ENCODE measurements at regions of chr6 and their contacts with region 1.

Region 1: DNA sequence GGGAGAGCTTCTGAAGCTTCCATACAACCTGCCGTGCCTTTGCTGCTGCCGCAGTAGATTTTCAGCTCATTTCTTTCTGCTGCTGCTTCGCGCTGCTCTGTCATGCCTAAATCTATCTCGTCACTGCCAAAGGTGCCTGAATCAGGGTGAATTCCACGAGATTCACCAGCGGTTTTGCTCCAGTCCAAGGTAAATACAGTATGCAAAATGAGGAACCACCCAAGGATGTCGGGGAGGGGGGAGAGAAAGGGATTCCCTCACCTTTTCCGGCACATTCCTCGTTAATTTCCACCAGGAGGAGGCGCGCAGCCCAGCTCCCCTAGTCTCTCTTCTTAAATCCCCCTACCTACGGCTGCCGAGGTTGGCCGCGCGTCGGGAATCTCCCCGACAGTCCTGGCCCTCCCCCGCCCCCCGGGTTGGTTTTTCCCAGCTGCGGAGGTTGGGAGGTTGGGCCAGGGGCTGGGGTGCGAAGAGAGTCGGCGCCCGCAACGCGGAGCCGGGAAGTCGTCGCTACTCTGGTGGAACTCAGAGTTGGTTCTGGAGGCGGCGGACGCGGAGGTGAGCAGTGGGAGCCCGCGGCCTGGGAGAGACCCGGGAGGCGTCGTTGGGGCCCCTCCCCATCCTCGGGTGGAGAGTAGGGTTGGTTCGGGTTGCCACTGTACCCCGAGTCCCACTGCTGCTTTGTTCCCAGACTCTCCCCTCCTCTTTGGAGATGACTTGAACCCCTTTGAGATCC is at the start of gene TPBG:
- DNase-seq: peak; percentile 69
- ATAC-seq: peak; percentile 59
- H3K4me3 ChIP-seq: peak within 1 kb of the TSS; percentile 79
- H3K27ac ChIP-seq: peak within 1 kb of the TSS; percentile 81
- H3K4me1 ChIP-seq: peaks cover 28% of the 10 kb centered on the region
- H3K27me3 ChIP-seq: no peaks in the 10 kb centered on the region
- CTCF ChIP-seq: peak; percentile 48
- total RNA-seq, gene TPBG: 43.0 and 49.6 TPM in 2 replicates

Region 2: GRCh38 chr6:82260997-82261686 is 102.4 kb before region 1 on chr6:
- CTCF ChIA-PET with region 1: no interaction called
- POLR2A ChIA-PET with region 1: no interaction called
- intact Hi-C with region 1: no loop called
- DNase-seq: no peak
- ATAC-seq: no peak
- H3K4me3 ChIP-seq: no peak overlapping the region
- H3K27ac ChIP-seq: peak overlapping the region; percentile 69
- H3K4me1 ChIP-seq: peaks cover 28% of the 10 kb centered on the region
- H3K27me3 ChIP-seq: no peaks in the 10 kb centered on the region
- CTCF ChIP-seq: no peak

Region 3: GRCh38 chr6:82396964-82397751 is 33.6 kb after region 1 on chr6:
- CTCF ChIA-PET with region 1: no interaction called
- POLR2A ChIA-PET with region 1: interaction called, 4 read pairs
- intact Hi-C with region 1: loop called (anchors 5 kb)
- DNase-seq: peak; percentile 93
- ATAC-seq: peak; percentile 81
- H3K4me3 ChIP-seq: peak overlapping the region; percentile 56
- H3K27ac ChIP-seq: peak overlapping the region; percentile 99
- H3K4me1 ChIP-seq: peaks cover 33% of the 10 kb centered on the region
- H3K27me3 ChIP-seq: no peaks in the 10 kb centered on the region
- CTCF ChIP-seq: no peak

Region 4: DNA sequence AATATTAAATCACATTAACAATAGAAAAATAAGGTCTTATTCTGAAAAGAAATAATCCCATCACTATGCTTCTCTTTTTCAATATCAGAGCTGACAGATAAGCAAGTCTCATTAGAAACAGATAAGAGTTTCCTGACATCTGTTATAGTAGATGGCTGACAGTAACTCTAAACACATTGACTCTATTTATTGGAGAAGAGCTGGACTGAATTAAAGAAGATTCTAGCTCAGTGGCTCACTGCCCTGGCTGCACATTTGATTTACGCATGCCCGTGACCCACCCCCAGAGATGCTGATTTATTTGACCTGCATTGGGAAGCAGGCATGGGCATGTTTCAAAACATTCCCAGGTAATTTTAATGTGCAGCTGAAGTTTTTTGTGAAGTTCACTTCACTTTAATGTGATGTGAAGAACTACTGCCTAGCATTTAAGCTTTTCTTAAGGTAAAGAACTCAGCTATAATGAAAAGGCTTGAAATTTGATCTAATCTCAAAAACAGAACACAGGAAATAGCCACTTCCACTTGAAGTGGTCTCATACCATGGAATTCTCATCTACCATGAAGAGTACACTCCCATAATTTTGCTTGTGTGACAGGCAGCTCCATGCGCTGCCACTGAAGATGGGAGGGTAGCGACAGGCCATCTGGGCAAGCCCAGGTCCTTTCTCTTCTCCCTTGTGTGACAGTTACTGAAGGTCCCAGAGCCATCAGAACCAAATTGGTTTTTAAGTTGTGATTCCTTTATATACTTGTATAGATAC is 162.4 kb after region 1 on chr6:
- CTCF ChIA-PET with region 1: no interaction called
- POLR2A ChIA-PET with region 1: no interaction called
- intact Hi-C with region 1: loop called (anchors 10 kb)
- DNase-seq: no peak
- ATAC-seq: no peak
- H3K4me3 ChIP-seq: no peak overlapping the region
- H3K27ac ChIP-seq: no peak overlapping the region
- H3K4me1 ChIP-seq: no peaks in the 10 kb centered on the region
- H3K27me3 ChIP-seq: no peaks in the 10 kb centered on the region
- CTCF ChIP-seq: no peak

Region 5: DNA sequence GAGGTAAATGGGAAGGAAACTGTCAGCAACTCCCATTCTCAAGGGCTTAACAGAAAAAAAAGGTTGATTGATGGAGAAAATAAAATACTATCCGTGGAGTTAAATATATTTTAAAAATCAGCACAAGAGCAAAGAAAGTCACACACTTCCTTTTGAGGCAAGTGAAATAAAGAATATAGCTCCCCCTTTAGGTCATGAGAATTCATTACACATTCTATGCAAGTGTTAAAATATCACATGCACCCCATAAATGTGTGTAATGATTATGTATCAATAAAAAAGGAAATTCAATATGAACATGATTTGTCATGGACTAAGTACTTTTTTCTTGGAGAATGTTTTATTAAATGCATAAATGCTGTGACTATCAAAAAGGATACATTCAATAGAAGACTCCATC is 349.3 kb after region 1 on chr6:
- CTCF ChIA-PET with region 1: no interaction called
- POLR2A ChIA-PET with region 1: no interaction called
- intact Hi-C with region 1: no loop called
- DNase-seq: peak; percentile 23
- ATAC-seq: no peak
- H3K4me3 ChIP-seq: no peak overlapping the region
- H3K27ac ChIP-seq: no peak overlapping the region
- H3K4me1 ChIP-seq: no peaks in the 10 kb centered on the region
- H3K27me3 ChIP-seq: no peaks in the 10 kb centered on the region
- CTCF ChIP-seq: peak; percentile 65